ENCODE measurements at regions of chr12 and their contacts with region 1.

Region 1: GRCh38 chr12:113980537-113981337 is 14.6 kb upstream of the RBM19 start:
- DNase-seq: peak; percentile 76
- H3K4me3 Mint-ChIP-seq: no peak overlapping the region
- H3K27ac Mint-ChIP-seq: no peak overlapping the region
- H3K4me1 Mint-ChIP-seq: no peaks in the 10 kb centered on the region
- H3K27me3 Mint-ChIP-seq: peaks cover 6% of the 10 kb centered on the region

Region 2: DNA sequence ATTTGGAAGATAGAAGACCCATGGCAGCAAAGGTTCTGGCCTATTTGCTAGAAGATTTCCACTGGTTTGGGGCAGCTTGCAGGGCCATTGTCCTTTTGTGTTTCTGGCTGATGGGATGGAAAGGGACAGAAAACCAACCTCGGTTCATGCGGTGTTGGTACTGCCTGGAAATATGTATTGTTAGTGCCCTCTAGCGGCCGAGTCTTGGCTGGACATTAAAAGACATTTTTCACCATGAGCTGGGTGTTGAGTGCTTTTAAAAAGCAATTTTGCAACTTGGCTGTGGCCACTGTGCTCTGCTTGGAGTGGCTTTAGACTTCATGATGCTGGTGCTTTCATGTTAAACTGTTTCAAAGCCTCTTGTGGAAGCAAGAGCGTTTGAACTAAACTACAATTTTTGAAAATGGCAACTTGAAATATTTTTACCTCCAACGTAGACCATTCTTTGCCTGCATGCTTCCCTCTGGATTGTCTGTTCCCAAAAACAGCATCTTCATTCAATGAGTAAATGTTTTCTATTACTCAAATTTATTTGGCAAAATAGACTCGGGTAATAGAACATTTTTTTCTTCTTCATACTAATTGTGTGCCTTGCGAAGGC is 527.9 kb after region 1 on chr12:
- intact Hi-C with region 1: loop called (anchors 1 kb)
- DNase-seq: peak; percentile 85
- H3K4me3 Mint-ChIP-seq: no peak overlapping the region
- H3K27ac Mint-ChIP-seq: no peak overlapping the region
- H3K4me1 Mint-ChIP-seq: no peaks in the 10 kb centered on the region
- H3K27me3 Mint-ChIP-seq: no peaks in the 10 kb centered on the region

Region 3: DNA sequence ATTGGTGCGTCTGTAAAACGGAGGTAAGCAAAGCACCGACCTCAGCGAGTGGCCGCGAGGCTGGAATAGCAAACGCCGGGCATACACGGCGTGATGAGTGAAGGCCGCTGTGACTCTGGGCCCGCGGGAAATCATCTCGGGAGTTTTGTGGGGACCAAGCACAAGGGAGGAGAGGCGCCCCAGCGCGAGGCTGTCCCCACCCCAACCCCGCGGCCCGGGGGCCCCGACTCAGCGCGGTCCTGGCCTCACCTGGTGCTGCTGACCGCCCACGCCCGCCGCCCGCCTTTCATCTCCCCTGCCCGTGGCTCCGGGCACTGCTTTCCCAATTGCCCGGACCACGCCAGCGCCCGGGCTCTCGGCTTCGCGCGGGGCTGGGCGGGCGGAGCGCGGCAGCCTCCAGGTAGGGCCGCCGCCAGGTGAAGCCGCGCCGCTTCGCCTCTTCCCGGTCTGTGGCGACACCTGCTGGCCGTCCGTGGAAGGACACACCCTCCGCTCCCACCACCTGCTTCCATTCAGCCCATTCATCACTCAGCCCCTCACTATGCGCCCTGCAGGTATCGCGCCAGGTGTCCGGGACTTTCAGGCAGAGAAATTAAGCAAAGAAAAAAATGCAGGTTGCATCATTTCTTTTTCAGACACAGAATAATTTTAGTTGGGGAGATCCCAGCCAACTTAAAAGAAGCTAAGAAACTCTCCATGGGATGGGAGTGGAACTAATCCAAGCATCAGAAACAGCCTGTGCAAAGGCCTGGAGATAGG is 1936.4 kb after region 1 on chr12:
- intact Hi-C with region 1: loop called (anchors 5 kb)
- DNase-seq: peak; percentile 92
- H3K4me3 Mint-ChIP-seq: no peak overlapping the region
- H3K27ac Mint-ChIP-seq: no peak overlapping the region
- H3K4me1 Mint-ChIP-seq: no peaks in the 10 kb centered on the region
- H3K27me3 Mint-ChIP-seq: peaks cover 21% of the 10 kb centered on the region